ENCODE measurements at regions of chr2 and their contacts with region 1.

Region 1: DNA sequence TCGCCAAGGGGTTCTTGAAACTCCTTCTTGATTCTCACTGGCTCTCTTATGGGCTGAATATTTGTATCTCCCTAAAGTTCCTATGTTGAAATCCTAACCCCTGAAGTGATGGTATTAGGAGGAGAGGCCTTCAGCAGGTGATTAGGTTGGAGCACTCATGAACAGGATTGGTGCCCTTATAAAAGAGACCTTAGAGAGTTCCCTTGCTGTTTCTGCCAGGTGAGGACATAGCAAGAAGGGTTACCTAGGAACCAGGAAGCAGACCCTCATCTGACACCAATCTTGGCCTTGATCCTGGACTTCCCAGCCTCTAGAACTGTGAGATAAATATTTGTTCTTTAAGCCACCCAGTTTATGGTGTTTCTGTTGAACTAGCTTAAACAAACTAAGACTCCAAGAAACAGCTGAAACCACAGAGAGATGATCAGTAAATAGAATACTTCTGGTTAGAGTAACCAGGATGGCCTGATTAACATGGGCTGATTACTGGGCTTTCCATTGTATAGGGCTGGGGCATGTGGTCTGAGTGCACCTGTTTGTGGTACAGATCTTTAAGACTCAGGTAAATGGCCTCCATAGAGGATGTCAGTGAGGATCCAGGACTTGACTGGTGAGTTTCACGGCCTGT is 7.7 kb upstream of the CDC42EP3 start:
- DNase-seq: no peak

Region 2: GRCh38 chr2:37653805-37654378 is 25.3 kb before region 1 on chr2:
- intact Hi-C with region 1: loop called in 1 of 2 experiments (anchors 1 kb)
- DNase-seq: peak; percentile 80

Measured in posterior vena cava (tissue), 2 donors.